Thyroid gland (tissue), 4 donors: ENCODE measurements at regions of chr18 and their contacts with region 1.

Region 1: GRCh38 chr18:3595369-3596273 is 145.6 kb downstream of the TGIF1 start:
- DNase-seq: peak in 1 of 2 donors; percentile 26
- H3K4me3 ChIP-seq: peak overlapping the region in 1 of 3 donors; percentile 35
- H3K27ac ChIP-seq: peak overlapping the region; percentile 94 to 98 (median 98)
- H3K4me1 ChIP-seq: peaks cover 37 to 42% of the 10 kb centered on the region in 2 donors
- H3K27me3 ChIP-seq: no peaks in the 10 kb centered on the region
- CTCF ChIP-seq: no peak
- POLR2A ChIP-seq: peak in 1 of 2 donors; percentile 31

Region 2: DNA sequence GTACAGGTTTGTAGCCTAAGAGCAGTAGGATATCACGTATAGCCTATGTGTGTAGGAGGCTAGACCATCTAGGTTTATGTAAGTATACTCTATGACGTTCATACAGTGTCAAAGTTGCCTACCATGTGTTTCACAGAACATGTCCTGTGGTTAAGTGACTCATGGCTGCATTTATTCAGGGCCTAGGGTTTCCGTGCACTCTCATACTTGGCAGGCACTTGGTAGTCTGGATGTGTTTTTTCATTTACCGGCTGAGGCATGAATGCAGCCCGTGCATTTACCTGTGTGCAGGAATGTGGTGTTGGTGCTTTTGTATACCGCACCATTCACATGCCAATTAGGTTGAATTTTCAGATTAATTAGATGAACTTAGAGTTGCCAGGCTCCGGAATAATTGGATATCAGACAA is 290.3 kb before region 1 on chr18:
- intact Hi-C with region 1: no loop called
- DNase-seq: no peak
- H3K4me3 ChIP-seq: no peak overlapping the region
- H3K27ac ChIP-seq: no peak overlapping the region
- H3K4me1 ChIP-seq: no peaks in the 10 kb centered on the region
- H3K27me3 ChIP-seq: no peaks in the 10 kb centered on the region
- CTCF ChIP-seq: no peak
- POLR2A ChIP-seq: no peak

Region 3: DNA sequence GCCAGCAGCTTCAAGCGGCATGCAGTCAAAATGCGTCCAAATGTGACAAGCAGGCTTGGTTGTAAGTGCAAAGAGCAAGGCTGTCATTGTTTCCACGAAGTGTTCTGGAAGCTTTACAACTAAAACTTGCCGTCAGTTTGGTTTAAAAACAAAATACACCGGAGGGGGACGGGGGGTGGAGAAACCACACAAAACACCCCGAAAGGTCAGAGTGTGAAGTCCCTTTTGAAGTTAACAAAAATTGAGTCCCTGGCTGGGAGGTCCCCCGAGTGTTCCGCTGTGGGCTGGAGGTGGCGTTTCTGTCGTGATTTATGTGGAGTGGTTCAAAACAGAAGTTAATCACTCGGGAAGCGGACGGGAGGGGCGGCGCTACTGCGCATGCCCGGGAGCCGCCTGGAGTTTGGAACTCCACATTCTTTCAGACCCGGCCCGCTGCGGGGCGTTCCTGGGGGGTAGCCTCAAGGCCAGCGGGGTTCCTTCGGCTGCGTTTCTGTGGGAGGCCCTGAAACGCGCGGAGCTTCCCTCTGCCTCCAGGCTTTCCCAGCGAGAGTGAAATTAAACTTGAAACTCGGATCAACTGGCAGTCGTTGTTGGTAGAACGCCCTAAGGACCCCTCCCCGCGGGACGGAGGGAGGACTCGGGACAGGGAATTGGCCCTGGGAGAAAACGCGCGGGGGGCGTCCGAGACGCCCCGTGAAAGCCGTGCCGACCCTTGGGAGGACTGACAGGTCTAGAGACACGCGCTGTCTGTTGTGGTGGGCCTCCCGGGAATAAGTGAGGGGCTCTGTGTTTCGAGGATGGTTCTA is 144.2 kb before region 1 on chr18:
- intact Hi-C with region 1: loop called (anchors 5 kb)
- DNase-seq: peak; percentile 98
- H3K4me3 ChIP-seq: peak overlapping the region; percentile 68 to 97 (median 96)
- H3K27ac ChIP-seq: peak overlapping the region; percentile 93 to 100 (median 98)
- H3K4me1 ChIP-seq: peaks cover 30 to 32% of the 10 kb centered on the region in 2 donors
- H3K27me3 ChIP-seq: no peaks in the 10 kb centered on the region
- CTCF ChIP-seq: no peak
- POLR2A ChIP-seq: peak; percentile 82 to 98

Region 4: GRCh38 chr18:3679241-3679640 is 83.6 kb after region 1 on chr18:
- intact Hi-C with region 1: no loop called
- DNase-seq: no peak
- H3K4me3 ChIP-seq: no peak overlapping the region
- H3K27ac ChIP-seq: no peak overlapping the region
- H3K4me1 ChIP-seq: no peaks in the 10 kb centered on the region
- H3K27me3 ChIP-seq: no peaks in the 10 kb centered on the region
- CTCF ChIP-seq: no peak
- POLR2A ChIP-seq: no peak

Region 5: GRCh38 chr18:3874125-3874524 is 278.5 kb after region 1 on chr18:
- intact Hi-C with region 1: no loop called
- DNase-seq: peak in 1 of 2 donors; percentile 11
- H3K4me3 ChIP-seq: no peak overlapping the region
- H3K27ac ChIP-seq: no peak overlapping the region
- H3K4me1 ChIP-seq: peaks cover 0 to 7% of the 10 kb centered on the region in 2 donors
- H3K27me3 ChIP-seq: no peaks in the 10 kb centered on the region
- CTCF ChIP-seq: no peak
- POLR2A ChIP-seq: no peak